AG04449 (cell line): ENCODE measurements at regions of chr17 and their contacts with region 1.

Region 1: DNA sequence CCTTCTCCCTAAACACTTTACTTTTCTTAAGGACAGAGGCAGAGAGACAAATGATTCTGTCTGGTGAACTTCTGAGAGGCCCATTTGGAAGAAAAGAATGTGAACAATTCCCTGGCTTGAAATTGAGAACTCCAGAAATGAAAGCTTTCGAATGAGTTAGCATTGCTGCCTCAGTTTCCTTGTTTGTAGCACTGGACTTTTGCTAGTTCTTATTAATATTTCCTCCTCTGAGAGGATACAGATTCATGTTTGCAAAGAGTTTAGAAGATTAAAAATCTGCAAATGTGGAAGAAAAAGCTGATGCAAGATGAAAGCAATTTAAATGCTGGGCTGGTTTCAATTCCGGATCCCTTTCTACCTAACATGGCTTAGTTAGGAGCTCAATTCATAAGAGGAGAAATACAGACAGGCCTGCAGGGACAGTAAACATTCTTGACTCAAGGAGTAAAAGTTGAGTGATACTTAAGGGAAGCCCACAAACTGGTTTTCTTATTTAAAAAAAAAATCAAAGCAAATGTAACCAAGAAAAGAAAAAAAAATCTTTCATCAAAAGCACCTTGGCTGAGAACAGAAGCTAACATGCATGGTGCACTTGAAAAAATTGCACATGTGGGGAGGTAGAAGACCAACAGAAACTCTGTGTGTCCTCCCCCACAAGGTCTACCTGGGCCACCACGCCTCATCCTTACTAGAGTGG is 27.1 kb downstream of the HNF1B start:
- DNase-seq: no peak
- H3K4me3 ChIP-seq: no peak overlapping the region; the same call in 1 of the 2 replicates
- CTCF ChIP-seq: no peak

Region 2: GRCh38 chr17:37527249-37527851 is 190.4 kb before region 1 on chr17:
- CTCF ChIA-PET with region 1: no interaction called
- POLR2A ChIA-PET with region 1: no interaction called
- DNase-seq: no peak
- H3K4me3 ChIP-seq: no peak overlapping the region
- CTCF ChIP-seq: peak; percentile 67

Region 3: DNA sequence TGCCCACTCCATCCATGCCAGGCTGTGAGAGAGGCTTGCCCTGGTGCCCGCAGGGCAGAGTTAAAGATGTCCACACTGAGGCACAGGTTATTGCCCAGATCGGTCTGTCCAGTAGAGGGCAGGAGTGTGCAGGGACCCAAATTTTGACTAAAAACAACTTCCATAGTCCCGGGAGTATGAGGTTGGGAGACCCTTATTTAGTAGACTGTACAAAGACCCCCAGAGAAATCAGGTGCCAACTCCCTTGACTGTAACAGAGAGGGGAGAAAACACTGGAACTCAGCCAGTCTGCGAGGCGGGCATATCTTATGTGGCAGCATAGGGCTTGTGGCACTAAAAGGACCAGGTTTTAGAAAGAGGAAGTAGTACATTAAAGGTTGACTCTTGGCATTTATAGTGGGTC is 16.3 kb before region 1 on chr17:
- CTCF ChIA-PET with region 1: interaction called, 31 read pairs
- POLR2A ChIA-PET with region 1: interaction called, 5 read pairs
- DNase-seq: no peak
- H3K4me3 ChIP-seq: no peak overlapping the region
- CTCF ChIP-seq: peak; percentile 32

Region 4: GRCh38 chr17:37737081-37737480 is 19.3 kb after region 1 on chr17:
- CTCF ChIA-PET with region 1: interaction called, 13 read pairs
- POLR2A ChIA-PET with region 1: interaction called, 3 read pairs
- DNase-seq: no peak
- H3K4me3 ChIP-seq: no peak overlapping the region
- CTCF ChIP-seq: peak; percentile 4